Kidney (tissue), 22 donors: ENCODE measurements at regions of chr6 and their contacts with region 1.

Region 1: DNA sequence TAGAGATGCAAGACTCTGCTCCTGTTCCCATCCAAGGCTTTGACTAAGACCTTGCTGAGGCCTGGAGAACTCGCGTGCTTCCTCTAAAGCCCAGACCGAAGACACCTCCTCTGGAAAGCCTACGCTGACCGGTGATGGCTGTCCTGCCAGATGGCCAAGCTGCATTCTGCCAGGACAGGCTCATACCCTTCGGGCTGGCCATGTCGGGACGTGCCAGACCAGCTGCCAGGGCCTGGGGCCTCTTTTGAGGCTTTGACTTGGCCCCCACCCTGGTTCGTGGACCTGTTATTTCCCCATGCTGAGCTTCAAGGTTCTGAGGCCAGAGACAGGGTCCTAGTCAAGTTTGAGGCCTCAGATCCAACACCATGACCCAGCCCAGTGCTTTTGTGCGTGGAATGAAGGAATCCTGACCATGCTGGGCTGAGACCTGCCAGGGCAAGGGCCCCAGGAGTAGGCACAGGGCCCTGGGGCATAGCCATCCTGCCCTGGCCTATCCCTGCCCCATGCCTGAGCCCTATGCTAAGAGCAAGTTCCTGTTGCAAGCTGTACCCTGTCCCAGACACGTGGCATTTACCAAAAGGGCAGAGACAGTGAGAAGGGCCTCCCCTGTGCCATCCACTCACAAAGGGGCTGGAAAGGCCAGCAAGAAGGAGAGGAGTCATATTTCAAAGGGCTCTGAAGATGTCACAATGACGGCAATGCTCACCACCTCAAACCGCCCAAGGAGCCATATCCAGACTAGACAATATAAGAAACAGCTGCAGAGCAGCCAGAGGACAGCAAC is 42.8 kb downstream of the MRPL14 start:
- DNase-seq: peak in 4 of 5 donors; percentile 62 to 83 (median 78)
- H3K4me3 ChIP-seq: no peak overlapping the region
- H3K27ac ChIP-seq: no peak overlapping the region
- H3K4me1 ChIP-seq: peaks cover 0 to 11% (median 8%) of the 10 kb centered on the region in 3 donors
- H3K27me3 ChIP-seq: no peaks in the 10 kb centered on the region
- CTCF ChIP-seq: no peak

Region 2: GRCh38 chr6:43667245-43668150 is 416.9 kb before region 1 on chr6:
- intact Hi-C with region 1: loop called (anchors 5 kb)
- DNase-seq: peak; percentile 90 to 96 (median 94)
- H3K4me3 ChIP-seq: peak overlapping the region in 1 of 3 donors; percentile 18
- H3K27ac ChIP-seq: peak overlapping the region in 1 of 2 donors; percentile 32
- H3K4me1 ChIP-seq: peaks cover 3 to 17% (median 15%) of the 10 kb centered on the region in 3 donors
- H3K27me3 ChIP-seq: no peaks in the 10 kb centered on the region
- CTCF ChIP-seq: peak; percentile 98

Region 3: GRCh38 chr6:43769526-43770416 is 314.7 kb before region 1 on chr6 and contains the start of gene VEGFA:
- intact Hi-C with region 1: loop called (anchors 5 kb)
- DNase-seq: peak; percentile 94 to 96 (median 96)
- H3K4me3 ChIP-seq: peak within 1 kb of the TSS; percentile 62 to 97 (median 85)
- H3K27ac ChIP-seq: peak within 1 kb of the TSS; percentile 94 to 96
- H3K4me1 ChIP-seq: peaks cover 0 to 5% (median 5%) of the 10 kb centered on the region in 3 donors
- H3K27me3 ChIP-seq: no peaks in the 10 kb centered on the region
- CTCF ChIP-seq: peak; percentile 100
- total RNA-seq, gene VEGFA: 36.3 TPM

Region 4: GRCh38 chr6:43964659-43965570 is 119.5 kb before region 1 on chr6:
- intact Hi-C with region 1: no loop called
- DNase-seq: peak in 1 of 5 donors; percentile 31
- H3K4me3 ChIP-seq: no peak overlapping the region
- H3K27ac ChIP-seq: no peak overlapping the region
- H3K4me1 ChIP-seq: peaks cover 0 to 5% (median 2%) of the 10 kb centered on the region in 3 donors
- H3K27me3 ChIP-seq: no peaks in the 10 kb centered on the region
- CTCF ChIP-seq: no peak